Activated naive CD4-positive, alpha-beta T cell treated with anti-CD3 and anti-CD28 coated beads for 36 hours (primary cell): ENCODE measurements at regions of chr6 and their contacts with region 1.

Region 1: DNA sequence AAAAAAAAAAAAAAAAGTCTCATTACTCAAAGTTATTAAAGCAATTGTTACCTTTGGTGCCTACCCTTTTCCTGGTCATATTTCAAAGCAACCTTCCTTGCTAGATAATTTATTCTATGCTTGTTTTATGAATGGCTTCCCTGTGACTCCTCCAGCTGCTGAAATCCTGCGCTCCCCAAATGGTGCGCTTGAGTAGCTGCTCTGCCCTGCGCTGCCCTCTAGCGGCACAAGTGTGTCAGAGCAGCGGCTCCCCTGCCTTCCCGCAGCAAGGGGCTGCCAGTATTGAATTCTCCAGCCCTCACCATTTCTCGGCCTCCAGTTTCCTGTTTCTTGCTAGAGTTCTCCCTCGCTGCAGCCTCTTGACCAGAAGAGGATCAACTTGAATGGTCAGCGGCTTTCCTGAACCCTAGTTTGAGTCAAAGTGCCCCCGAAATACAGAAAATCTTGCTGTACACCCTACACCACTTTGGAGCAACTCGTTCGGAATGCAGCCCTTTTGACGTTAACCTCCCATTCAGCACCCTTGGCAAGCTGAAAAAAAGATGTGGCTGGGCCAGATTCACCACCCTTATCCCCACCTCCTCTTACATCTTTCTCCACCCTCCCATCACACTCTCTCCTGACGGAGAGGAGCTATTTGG is 60.4 kb upstream of the KLHL31 start:
- DNase-seq: peak; percentile 83
- H3K4me3 Mint-ChIP-seq: no peak overlapping the region
- H3K27ac Mint-ChIP-seq: no peak overlapping the region
- H3K4me1 Mint-ChIP-seq: peaks cover 5% of the 10 kb centered on the region
- H3K27me3 Mint-ChIP-seq: peaks cover 11% of the 10 kb centered on the region

Region 2: DNA sequence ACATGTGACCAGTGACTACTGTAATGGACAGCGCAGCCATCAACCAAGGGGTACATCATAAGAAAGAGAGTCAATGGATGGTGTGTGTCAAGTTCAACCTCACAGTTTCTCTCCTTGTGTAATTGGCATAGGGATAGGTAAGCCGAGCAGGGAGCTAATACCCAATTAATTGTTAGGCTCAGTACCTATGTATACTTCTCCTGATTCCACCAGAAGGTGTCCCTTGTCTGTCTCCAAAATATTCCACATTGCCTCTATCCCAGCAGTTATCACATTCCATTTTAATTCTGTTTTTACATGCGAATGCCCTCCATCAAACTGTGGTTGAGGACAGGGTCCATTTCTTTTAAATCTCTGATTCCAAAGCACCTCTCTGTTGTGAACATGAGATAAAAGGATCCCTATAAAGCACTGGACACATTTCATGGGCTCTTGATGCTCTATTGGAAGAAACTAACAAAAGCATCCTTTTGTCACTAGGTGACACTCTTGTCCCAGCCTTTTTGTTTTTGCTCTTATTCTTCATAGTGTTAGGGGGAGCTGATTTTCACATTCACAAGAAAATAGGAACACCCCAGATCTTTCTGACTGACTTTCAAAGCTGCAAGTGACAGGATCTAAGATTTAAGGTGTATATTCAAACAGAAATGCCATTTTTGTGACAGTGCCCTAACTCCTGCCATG is 621.8 kb before region 1 on chr6:
- CTCF ChIA-PET with region 1: no interaction called
- intact Hi-C with region 1: loop called (anchors 1 kb)
- DNase-seq: no peak
- H3K4me3 Mint-ChIP-seq: no peak overlapping the region
- H3K27ac Mint-ChIP-seq: no peak overlapping the region
- H3K4me1 Mint-ChIP-seq: no peaks in the 10 kb centered on the region
- H3K27me3 Mint-ChIP-seq: no peaks in the 10 kb centered on the region

Region 3: DNA sequence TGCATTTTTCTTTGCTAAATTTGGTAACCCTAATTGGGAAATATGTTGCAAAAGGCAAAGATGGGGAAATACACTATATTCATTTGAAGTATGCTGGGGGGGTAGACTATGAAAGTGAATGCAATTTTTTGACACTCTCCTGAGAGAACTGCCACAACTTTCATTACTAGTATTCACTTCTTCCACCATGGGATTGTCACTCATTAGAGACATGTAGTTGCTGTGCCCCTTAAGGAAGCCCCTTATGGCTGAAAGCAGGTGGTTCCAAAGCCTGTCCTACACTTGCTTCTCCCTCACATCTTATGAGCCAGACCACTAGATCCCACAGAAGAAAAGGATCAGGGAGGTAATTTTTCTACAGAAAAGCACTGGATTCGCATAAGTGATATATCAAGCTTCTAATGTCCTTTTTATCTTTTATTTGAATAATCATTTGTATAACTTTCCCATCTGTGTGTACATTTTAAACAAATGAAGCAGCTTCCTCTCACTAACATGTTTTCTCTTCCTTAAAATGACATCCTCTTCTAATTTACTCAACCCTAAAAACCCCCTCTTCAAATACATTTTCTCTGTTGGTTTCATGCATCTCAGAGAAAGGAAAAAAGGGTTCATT is 264.8 kb before region 1 on chr6:
- CTCF ChIA-PET with region 1: no interaction called
- intact Hi-C with region 1: no loop called
- DNase-seq: no peak
- H3K4me3 Mint-ChIP-seq: no peak overlapping the region
- H3K27ac Mint-ChIP-seq: no peak overlapping the region
- H3K4me1 Mint-ChIP-seq: peaks cover 4% of the 10 kb centered on the region
- H3K27me3 Mint-ChIP-seq: no peaks in the 10 kb centered on the region

Region 4: GRCh38 chr6:53484476-53485280 is 241.2 kb before region 1 on chr6:
- CTCF ChIA-PET with region 1: interaction called, 10 read pairs
- intact Hi-C with region 1: no loop called
- DNase-seq: peak; percentile 86
- H3K4me3 Mint-ChIP-seq: no peak overlapping the region
- H3K27ac Mint-ChIP-seq: no peak overlapping the region
- H3K4me1 Mint-ChIP-seq: peaks cover 2% of the 10 kb centered on the region
- H3K27me3 Mint-ChIP-seq: peaks cover 33% of the 10 kb centered on the region

Region 5: GRCh38 chr6:53544470-53545308 is 181.2 kb before region 1 on chr6 and contains the start of gene GCLC:
- CTCF ChIA-PET with region 1: interaction called, 6 read pairs
- intact Hi-C with region 1: loop called (anchors 1 kb)
- DNase-seq: peak; percentile 88
- H3K4me3 Mint-ChIP-seq: peak within 1 kb of the TSS; percentile 94
- H3K27ac Mint-ChIP-seq: peak within 1 kb of the TSS; percentile 86
- H3K4me1 Mint-ChIP-seq: peaks cover 63% of the 10 kb centered on the region
- H3K27me3 Mint-ChIP-seq: no peaks in the 10 kb centered on the region
- total RNA-seq, gene GCLC: 13.9 to 18.1 TPM

Region 6: GRCh38 chr6:53679446-53679933 is 46.4 kb before region 1 on chr6:
- CTCF ChIA-PET with region 1: interaction called, 11 read pairs
- intact Hi-C with region 1: no loop called
- DNase-seq: no peak
- H3K4me3 Mint-ChIP-seq: no peak overlapping the region
- H3K27ac Mint-ChIP-seq: no peak overlapping the region
- H3K4me1 Mint-ChIP-seq: no peaks in the 10 kb centered on the region
- H3K27me3 Mint-ChIP-seq: no peaks in the 10 kb centered on the region

Region 7: DNA sequence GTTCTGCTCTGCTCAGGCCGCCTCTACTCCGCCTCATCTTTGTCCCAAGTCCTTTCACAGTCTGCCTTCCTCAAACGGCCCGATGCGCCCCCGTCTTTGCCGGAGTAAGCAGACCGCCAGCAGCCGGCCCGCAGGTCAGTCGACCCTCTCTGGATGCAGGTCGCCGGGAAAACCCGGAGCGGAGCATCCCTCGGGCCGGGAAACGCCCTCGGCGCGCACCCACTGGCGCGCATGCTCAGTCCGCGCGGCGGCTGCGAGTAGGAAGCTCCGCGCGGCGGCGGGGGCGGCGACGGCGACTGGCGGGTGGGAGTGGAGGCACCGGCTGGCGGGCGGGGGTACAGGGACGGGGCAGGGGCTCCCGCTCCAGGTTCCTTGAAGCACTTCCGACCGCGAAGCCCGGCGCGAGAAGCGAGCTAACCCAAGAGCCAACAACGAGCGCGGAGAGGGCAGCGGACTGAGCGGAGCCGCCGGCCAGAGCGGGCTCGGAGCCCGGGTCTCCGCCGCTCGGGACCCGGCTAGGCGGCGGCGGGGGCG is 68.9 kb after region 1 on chr6 and contains the start of gene LRRC1:
- CTCF ChIA-PET with region 1: no interaction called
- intact Hi-C with region 1: loop called (anchors 2 kb)
- DNase-seq: peak; percentile 82
- H3K4me3 Mint-ChIP-seq: peak within 1 kb of the TSS; percentile 95
- H3K27ac Mint-ChIP-seq: peak within 1 kb of the TSS; percentile 62
- H3K4me1 Mint-ChIP-seq: peaks cover 10% of the 10 kb centered on the region
- H3K27me3 Mint-ChIP-seq: peaks cover 19% of the 10 kb centered on the region
- total RNA-seq, gene LRRC1: 2.3 to 2.9 TPM